ENCODE measurements at regions of chr14 and their contacts with region 1.

Region 1: DNA sequence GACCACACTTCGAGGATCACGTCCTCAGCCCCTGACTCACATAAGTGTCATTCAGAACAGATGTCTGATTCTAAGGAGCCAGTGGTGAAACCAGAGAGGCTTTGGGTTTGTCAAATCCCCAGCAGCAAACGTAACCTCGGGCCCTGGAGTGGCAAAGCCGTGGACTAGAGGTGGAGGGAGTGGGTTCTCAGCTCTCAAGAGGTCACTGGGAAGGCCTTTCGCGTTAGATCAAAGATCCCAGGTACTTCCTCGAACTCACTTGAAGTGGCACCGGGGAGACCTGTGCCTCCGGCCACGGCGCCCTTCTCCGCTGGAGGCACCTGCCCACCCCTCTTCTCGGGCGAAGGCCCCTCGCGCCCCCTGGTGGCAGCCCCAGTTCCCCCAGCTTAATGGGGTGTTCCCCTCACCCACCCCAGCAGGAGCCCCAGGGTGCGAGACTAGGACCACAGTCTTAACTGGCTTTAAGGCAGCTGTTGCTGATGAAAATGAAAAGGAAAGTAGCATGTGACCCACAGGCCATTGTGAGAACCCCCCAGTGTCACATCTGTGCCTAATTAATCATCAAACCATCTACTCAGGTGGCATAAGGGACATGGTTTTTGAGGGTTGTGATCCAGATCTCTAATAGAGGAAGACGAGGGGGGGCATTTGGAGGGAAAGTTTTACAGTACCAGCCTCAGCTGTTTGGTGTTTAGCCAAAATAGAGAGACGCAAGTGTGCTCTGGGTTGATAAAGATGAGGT is 672 bp upstream of the ESR2 start:
- DNase-seq: peak; percentile 81 to 92 (median 89)
- H3K4me3 ChIP-seq: peak overlapping the region in 2 of 4 donors; percentile 53 to 62
- H3K27ac ChIP-seq: peak overlapping the region in 3 of 5 donors; percentile 21 to 66 (median 36)
- H3K4me1 ChIP-seq: peaks cover under 1 to 21% of the 10 kb centered on the region in 2 donors
- H3K27me3 ChIP-seq: no peaks in the 10 kb centered on the region
- CTCF ChIP-seq: peak; percentile 87 to 95 (median 92)
- POLR2A ChIP-seq: no peak

Region 2: GRCh38 chr14:64035143-64035542 is 259.7 kb before region 1 on chr14:
- intact Hi-C with region 1: loop called in 1 of 2 experiments (anchors 10 kb)
- DNase-seq: no peak
- H3K4me3 ChIP-seq: no peak overlapping the region
- H3K27ac ChIP-seq: no peak overlapping the region
- H3K4me1 ChIP-seq: peaks cover 0 to under 1% of the 10 kb centered on the region in 2 donors
- H3K27me3 ChIP-seq: no peaks in the 10 kb centered on the region
- CTCF ChIP-seq: no peak
- POLR2A ChIP-seq: no peak

Region 3: GRCh38 chr14:64147126-64147790 is 147.6 kb before region 1 on chr14:
- intact Hi-C with region 1: loop called in 1 of 2 experiments (anchors 10 kb)
- DNase-seq: no peak
- H3K4me3 ChIP-seq: no peak overlapping the region
- H3K27ac ChIP-seq: no peak overlapping the region
- H3K4me1 ChIP-seq: no peaks in the 10 kb centered on the region
- H3K27me3 ChIP-seq: no peaks in the 10 kb centered on the region
- CTCF ChIP-seq: no peak
- POLR2A ChIP-seq: no peak